HepG2 (cell line): ENCODE measurements at regions of chr12 and their contacts with region 1.

Region 1: DNA sequence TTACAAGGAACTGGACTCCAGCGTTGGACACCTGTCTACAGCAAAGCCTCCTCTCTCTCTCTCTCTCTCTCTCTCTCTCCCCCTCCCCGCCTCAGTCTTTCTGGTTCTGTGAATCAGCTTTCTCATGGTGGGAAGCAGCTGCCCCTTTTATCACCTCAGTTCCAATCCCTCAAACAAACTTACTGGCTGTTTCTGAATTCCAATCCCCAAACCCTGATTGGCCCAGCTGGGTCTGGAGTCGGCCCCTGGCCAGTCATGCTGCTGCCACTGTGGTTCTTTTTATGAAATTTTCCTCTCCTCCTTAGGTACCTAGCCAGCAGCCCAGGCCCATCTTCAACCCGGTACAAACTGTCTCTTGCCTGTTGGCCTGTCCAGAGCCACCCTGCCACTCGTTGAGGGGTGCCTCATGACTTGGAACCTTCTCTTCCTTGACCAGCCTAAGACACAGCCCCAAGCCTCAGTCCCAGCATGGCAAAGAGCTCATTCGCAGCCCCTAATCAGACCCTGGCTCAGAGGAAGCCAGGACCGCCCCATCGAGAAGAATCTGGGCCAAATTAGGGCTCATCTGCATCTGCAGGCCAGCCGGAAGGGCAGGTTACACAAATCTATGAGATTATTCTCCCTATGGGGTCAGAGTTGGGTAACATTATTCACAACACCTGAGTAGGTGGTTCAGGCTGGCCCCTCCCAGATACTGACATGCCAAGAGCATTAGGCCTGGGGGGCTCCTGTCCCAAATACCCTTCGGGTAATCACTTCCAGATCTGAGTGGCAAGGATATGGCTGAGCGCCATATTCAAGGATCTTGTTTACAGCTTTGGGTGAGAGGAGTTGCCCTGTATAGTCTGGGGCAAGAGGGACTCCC is 9.5 kb upstream of the MORN3 start:
- DNase-seq: no peak
- ATAC-seq: peak; percentile 37
- H3K4me3 ChIP-seq: peak overlapping the region in 1 of 3 experiments; percentile 22; a peak in 1 of 6 replicates
- H3K27ac ChIP-seq: no peak overlapping the region
- H3K4me1 ChIP-seq: peaks cover 18% of the 10 kb centered on the region
- H3K27me3 ChIP-seq: peaks cover 0 to 5% of the 10 kb centered on the region in 2 experiments; a peak in 1 of 5 replicates
- CTCF ChIP-seq: no peak
- EP300 ChIP-seq: no peak
- POLR2A ChIP-seq: no peak
- RAD21 ChIP-seq: no peak

Region 2: DNA sequence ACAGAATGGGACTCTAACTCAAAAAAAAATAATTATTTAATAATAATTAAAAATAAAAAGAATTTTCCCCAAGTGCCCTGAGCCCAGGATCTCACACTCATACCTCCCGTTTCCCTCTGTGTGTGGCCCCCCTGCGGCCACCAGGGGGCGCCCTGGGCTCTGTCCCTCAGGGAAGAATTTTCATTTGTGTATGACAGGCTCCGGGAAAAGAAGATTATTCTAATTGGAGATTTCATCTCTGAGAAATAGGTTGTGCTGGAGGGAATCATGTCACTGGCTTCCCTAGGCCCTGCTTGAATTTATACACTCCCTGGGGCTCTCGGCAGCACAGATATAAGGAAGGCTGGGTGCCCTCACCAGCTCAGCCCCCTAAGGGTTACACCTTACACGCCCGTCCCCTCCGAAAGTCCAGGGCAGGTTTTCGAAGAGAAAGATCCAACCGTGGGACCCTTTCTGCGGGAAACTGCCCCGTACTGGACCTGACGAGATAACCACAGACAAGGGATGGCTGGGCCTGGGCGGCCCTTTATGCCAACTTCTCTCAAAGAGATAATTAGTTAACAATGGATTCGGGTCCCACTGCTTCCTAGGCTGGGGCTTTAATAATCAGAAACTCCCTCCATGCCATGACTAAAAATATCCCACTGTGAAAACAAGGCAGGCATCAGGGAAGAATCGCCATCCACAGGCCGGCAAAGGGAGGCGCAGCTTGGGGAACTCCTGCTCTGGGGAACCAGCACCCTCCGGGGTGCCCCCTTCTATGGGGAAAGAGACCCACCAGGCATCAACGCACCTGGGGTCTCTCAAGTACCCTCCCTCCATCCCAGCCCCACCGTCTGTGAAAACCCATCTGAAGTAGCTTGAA is 178.8 kb before region 1 on chr12:
- CTCF ChIA-PET with region 1: interaction called, 20 read pairs
- POLR2A ChIA-PET with region 1: no interaction called
- in situ Hi-C with region 1: no loop called
- intact Hi-C with region 1: loop called (anchors 1 kb)
- DNase-seq: peak; percentile 57
- ATAC-seq: peak; percentile 89
- H3K4me3 ChIP-seq: no peak overlapping the region; a peak in 1 of 6 replicates
- H3K27ac ChIP-seq: no peak overlapping the region
- H3K4me1 ChIP-seq: peaks cover 21% of the 10 kb centered on the region
- H3K27me3 ChIP-seq: no peaks in the 10 kb centered on the region
- CTCF ChIP-seq: peak; percentile 78
- EP300 ChIP-seq: no peak
- POLR2A ChIP-seq: no peak
- RAD21 ChIP-seq: peak; percentile 40; the same call in 1 of the 2 replicates

Region 3: GRCh38 chr12:121530600-121531355 is 148.2 kb before region 1 on chr12:
- CTCF ChIA-PET with region 1: no interaction called
- POLR2A ChIA-PET with region 1: no interaction called
- in situ Hi-C with region 1: no loop called
- intact Hi-C with region 1: no loop called
- DNase-seq: no peak
- ATAC-seq: no peak
- H3K4me3 ChIP-seq: no peak overlapping the region
- H3K27ac ChIP-seq: no peak overlapping the region
- H3K4me1 ChIP-seq: peaks cover 13% of the 10 kb centered on the region; the same call in 1 of the 2 replicates
- H3K27me3 ChIP-seq: no peaks in the 10 kb centered on the region
- CTCF ChIP-seq: no peak
- EP300 ChIP-seq: no peak
- POLR2A ChIP-seq: no peak
- RAD21 ChIP-seq: no peak

Region 4: GRCh38 chr12:121560392-121561008 is 118.4 kb before region 1 on chr12:
- CTCF ChIA-PET with region 1: no interaction called
- POLR2A ChIA-PET with region 1: no interaction called
- in situ Hi-C with region 1: no loop called
- intact Hi-C with region 1: no loop called
- DNase-seq: no peak
- ATAC-seq: no peak
- H3K4me3 ChIP-seq: no peak overlapping the region
- H3K27ac ChIP-seq: no peak overlapping the region
- H3K4me1 ChIP-seq: peaks cover 12% of the 10 kb centered on the region
- H3K27me3 ChIP-seq: no peaks in the 10 kb centered on the region
- CTCF ChIP-seq: no peak
- EP300 ChIP-seq: no peak
- POLR2A ChIP-seq: no peak
- RAD21 ChIP-seq: no peak